Sciatic nerve (tissue), 2 donors: ENCODE measurements at regions of chr3 and their contacts with region 1.

Region 1: GRCh38 chr3:172317984-172318383 is 130.3 kb downstream of the GHSR start:
- DNase-seq: peak; percentile 67
- ATAC-seq: peak; percentile 92

Region 2: GRCh38 chr3:172256101-172256734 is 61.8 kb before region 1 on chr3:
- intact Hi-C with region 1: loop called (anchors 10 kb)
- DNase-seq: no peak
- ATAC-seq: peak; percentile 94

Region 3: GRCh38 chr3:172357850-172358754 is 40.1 kb after region 1 on chr3:
- intact Hi-C with region 1: no loop called
- DNase-seq: no peak
- ATAC-seq: peak; percentile 61